PC-9 (cell line): ENCODE measurements at regions of chr7 and their contacts with region 1.

Region 1: GRCh38 chr7:106779877-106780276 is 85.2 kb upstream of the PIK3CG start:
- DNase-seq: peak; percentile 78 to 88
- H3K4me3 ChIP-seq: no peak overlapping the region
- H3K27ac ChIP-seq: peak overlapping the region; percentile 70
- H3K4me1 ChIP-seq: peaks cover 34% of the 10 kb centered on the region
- H3K27me3 ChIP-seq: no peaks in the 10 kb centered on the region
- CTCF ChIP-seq: 0 out of 2 replicates have a peak, but pooled peaks have one; percentile 34

Region 2: DNA sequence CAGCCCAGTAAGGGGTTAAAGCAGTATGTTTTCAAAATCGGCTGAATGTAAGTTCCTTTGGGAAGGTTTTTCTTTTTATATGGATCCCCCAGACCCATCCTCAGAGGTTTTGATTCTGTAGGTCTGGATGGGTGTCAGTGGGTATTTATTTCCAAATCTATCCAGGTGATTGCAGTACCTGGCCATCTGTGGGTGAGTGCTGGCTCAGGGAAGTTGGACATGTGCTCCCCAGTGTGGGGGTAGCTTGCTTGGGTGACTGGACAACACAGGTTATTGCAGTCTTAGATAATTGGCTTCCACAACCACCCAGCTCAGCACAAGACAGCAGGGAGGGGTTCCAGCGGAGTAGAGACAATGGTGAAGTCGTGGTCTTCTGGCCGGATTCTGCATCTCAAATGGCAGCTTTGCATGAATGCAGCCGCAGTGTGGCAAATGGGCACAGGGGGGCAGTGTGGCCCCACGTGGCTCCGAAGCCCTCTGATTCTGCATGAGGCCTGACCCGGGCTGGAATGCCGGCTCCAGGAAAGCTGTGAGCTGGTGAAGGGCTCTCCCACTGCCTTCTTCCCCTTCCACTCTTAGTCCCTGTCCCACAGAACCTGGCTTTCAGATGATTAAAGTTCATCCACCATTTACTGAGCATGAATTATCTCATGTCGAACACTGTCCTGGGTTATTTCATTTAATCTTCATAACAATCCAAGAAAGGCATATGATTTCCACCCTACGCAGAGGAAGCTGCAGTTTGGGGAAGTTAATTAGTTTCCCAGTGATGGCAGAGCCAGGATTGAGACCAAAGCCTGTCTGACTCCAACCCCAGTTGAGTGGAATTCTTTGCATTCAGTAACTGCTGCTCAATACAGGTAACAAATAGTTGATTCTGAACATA is 603.2 kb before region 1 on chr7:
- CTCF ChIA-PET with region 1: interaction called, 4 read pairs
- POLR2A ChIA-PET with region 1: interaction called, 4 read pairs
- intact Hi-C with region 1: loop called (anchors 2 kb)
- DNase-seq: peak in 1 of 2 experiments; percentile 88
- H3K4me3 ChIP-seq: no peak overlapping the region
- H3K27ac ChIP-seq: no peak overlapping the region
- H3K4me1 ChIP-seq: peaks cover 10% of the 10 kb centered on the region
- H3K27me3 ChIP-seq: no peaks in the 10 kb centered on the region
- CTCF ChIP-seq: peak; percentile 93

Region 3: DNA sequence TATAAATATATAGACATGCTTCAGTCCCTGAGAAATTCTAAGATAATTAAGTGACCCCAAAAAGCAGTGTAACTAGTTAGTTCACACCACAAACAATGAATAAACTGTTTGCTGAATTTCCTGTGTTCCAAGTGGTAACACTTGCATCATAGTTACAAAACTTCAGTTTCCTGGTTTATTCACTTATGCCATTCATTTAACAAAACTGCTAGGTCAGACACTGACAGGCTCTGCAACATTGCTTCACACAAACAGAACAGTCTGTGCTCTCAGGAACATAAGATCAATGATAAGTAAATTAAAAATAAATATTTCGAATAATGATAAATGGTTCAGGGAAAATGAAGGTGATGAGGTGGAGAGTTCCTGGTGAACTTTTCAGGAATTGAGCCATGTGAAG is 361.8 kb before region 1 on chr7:
- CTCF ChIA-PET with region 1: no interaction called
- POLR2A ChIA-PET with region 1: interaction called, 16 read pairs
- intact Hi-C with region 1: no loop called
- DNase-seq: peak; percentile 17 to 92
- H3K4me3 ChIP-seq: peak overlapping the region; percentile 24; the same call in 1 of the 2 replicates
- H3K27ac ChIP-seq: peak overlapping the region; percentile 98
- H3K4me1 ChIP-seq: peaks cover 48% of the 10 kb centered on the region
- H3K27me3 ChIP-seq: no peaks in the 10 kb centered on the region
- CTCF ChIP-seq: no peak

Region 4: GRCh38 chr7:106542550-106543220 is 237.2 kb before region 1 on chr7:
- CTCF ChIA-PET with region 1: interaction called, 7 read pairs
- POLR2A ChIA-PET with region 1: no interaction called
- intact Hi-C with region 1: loop called (anchors 2 kb)
- DNase-seq: peak; percentile 61 to 70
- H3K4me3 ChIP-seq: no peak overlapping the region
- H3K27ac ChIP-seq: no peak overlapping the region
- H3K4me1 ChIP-seq: peaks cover 8% of the 10 kb centered on the region; the same call in 1 of the 2 replicates
- H3K27me3 ChIP-seq: no peaks in the 10 kb centered on the region
- CTCF ChIP-seq: peak; percentile 82

Region 5: GRCh38 chr7:106717955-106718871 is 61.7 kb before region 1 on chr7:
- CTCF ChIA-PET with region 1: no interaction called
- POLR2A ChIA-PET with region 1: interaction called, 5 read pairs
- intact Hi-C with region 1: loop called (anchors 2 kb)
- DNase-seq: peak; percentile 60 to 94
- H3K4me3 ChIP-seq: peak overlapping the region; percentile 17; the same call in 1 of the 2 replicates
- H3K27ac ChIP-seq: peak overlapping the region; percentile 85
- H3K4me1 ChIP-seq: peaks cover 30% of the 10 kb centered on the region
- H3K27me3 ChIP-seq: no peaks in the 10 kb centered on the region
- CTCF ChIP-seq: no peak

Region 6: DNA sequence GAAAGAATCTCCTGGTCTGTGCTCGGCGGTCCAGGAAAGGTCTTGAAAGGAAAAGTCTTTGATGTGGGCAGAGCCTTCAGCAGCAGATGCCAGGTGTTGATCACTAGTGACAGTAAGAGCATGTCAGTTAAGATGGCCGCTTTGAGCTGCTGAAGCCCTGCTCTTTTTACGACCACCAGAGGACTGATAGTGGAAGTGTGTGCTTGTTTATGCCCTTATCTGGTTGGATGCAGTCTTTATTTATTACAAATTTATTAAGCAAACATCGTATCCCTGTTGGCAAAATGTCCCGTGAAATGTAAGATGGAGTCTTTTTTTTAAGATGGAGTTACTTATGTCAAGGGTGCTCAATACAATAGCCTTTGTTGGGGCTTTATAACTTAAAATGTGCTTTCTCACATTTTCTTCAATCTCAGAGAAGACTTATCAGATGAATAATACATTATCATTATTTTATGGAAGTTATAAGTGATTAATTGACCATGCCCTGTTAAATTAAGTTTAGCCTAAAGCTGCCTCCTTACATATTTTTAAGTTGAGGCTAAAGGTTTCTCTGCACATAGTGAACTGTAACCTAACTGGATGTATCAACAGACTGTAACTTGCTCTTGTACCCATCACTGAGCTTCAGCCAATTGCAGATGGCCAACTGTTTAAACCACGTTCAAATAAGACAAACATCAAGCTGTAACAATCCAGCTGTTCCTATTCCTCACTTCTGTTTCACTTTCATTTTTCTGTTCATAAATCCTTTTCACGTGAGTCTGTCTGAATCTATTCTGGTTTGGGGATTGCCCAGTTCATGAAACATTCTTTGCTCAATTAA is 12.2 kb before region 1 on chr7:
- CTCF ChIA-PET with region 1: no interaction called
- POLR2A ChIA-PET with region 1: interaction called, 14 read pairs
- intact Hi-C with region 1: no loop called
- DNase-seq: no peak
- H3K4me3 ChIP-seq: no peak overlapping the region
- H3K27ac ChIP-seq: no peak overlapping the region
- H3K4me1 ChIP-seq: peaks cover 29% of the 10 kb centered on the region
- H3K27me3 ChIP-seq: no peaks in the 10 kb centered on the region
- CTCF ChIP-seq: no peak

Region 7: GRCh38 chr7:106870983-106871410 is 91.1 kb after region 1 on chr7:
- CTCF ChIA-PET with region 1: no interaction called
- POLR2A ChIA-PET with region 1: no interaction called
- intact Hi-C with region 1: no loop called
- DNase-seq: no peak
- H3K4me3 ChIP-seq: no peak overlapping the region
- H3K27ac ChIP-seq: no peak overlapping the region
- H3K4me1 ChIP-seq: no peaks in the 10 kb centered on the region
- H3K27me3 ChIP-seq: no peaks in the 10 kb centered on the region
- CTCF ChIP-seq: no peak